ENCODE measurements at regions of chr1 and their contacts with region 1.

Region 1: GRCh38 chr1:171769171-171769570 is 12.3 kb upstream of the METTL13 start:
- DNase-seq: no peak
- H3K4me3 ChIP-seq: no peak overlapping the region
- H3K27ac ChIP-seq: no peak overlapping the region
- H3K4me1 ChIP-seq: no peaks in the 10 kb centered on the region
- CTCF ChIP-seq: no peak

Region 2: DNA sequence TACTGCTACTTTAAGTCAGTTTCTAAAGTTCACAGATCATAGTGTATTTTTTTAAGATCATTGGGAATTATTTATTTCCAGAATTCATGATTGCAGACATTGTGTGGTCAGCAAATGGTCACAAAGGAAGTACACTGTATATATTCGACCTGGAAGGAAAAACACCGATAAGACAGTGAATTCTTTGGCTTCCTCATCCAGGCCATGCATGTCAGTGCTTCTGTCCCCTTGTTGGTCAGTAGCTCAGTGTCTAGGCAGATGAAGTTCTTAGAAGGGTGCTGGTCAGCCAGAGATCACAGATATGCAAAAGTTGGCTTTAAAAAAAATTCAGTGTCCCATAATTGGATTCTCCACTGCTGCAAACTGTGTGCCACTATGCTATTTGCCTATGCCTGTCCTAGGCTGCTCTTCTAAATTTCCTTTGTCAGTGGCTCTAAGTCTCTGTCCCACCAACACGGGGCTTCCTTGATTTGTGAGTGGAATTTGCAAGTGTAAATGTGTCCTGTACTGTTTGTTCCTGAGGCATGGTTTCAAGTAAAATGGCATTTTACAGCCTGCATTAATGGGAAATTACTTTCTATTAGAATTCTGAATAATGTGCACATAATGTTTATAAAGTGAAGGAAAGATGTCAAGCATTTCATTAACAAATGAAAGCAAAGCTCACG is 15.4 kb before region 1 on chr1:
- CTCF ChIA-PET with region 1: no interaction called
- POLR2A ChIA-PET with region 1: interaction called, 5 read pairs
- intact Hi-C with region 1: loop called (anchors 2 kb)
- DNase-seq: no peak
- H3K4me3 ChIP-seq: no peak overlapping the region
- H3K27ac ChIP-seq: no peak overlapping the region
- H3K4me1 ChIP-seq: no peaks in the 10 kb centered on the region
- CTCF ChIP-seq: no peak